ENCODE measurements at regions of chr7 and their contacts with region 1.

Region 1: GRCh38 chr7:74094224-74095101 is 10.9 kb downstream of the LIMK1 start:
- DNase-seq: peak; percentile 21 to 71 (median 29)
- ATAC-seq: peak; percentile 83
- H3K4me3 ChIP-seq: peak overlapping the region; percentile 77
- H3K4me3 Mint-ChIP-seq: peak overlapping the region; percentile 83 to 91 (median 88)
- H3K27ac ChIP-seq: peak overlapping the region; percentile 57
- H3K27ac Mint-ChIP-seq: peak overlapping the region; percentile 83 to 98 (median 90)
- H3K4me1 ChIP-seq: peaks cover 11 to 16% of the 10 kb centered on the region in 2 donors
- H3K4me1 Mint-ChIP-seq: peaks cover 3 to 23% (median 16%) of the 10 kb centered on the region in 7 donors
- H3K27me3 ChIP-seq: no peaks in the 10 kb centered on the region
- H3K27me3 Mint-ChIP-seq: no peaks in the 10 kb centered on the region

Region 2: GRCh38 chr7:74173866-74174605 is 79.6 kb after region 1 on chr7 and contains the start of gene EIF4H:
- CTCF ChIA-PET with region 1: interaction called, 3 read pairs
- POLR2A ChIA-PET with region 1: no interaction called
- intact Hi-C with region 1: loop called in 1 of 2 experiments (anchors 1 kb)
- DNase-seq: peak; percentile 90 to 97 (median 95)
- ATAC-seq: peak; percentile 97
- H3K4me3 ChIP-seq: peak within 1 kb of the TSS; percentile 87
- H3K4me3 Mint-ChIP-seq: peak within 1 kb of the TSS; percentile 86 to 98 (median 92)
- H3K27ac ChIP-seq: peak within 1 kb of the TSS; percentile 99
- H3K27ac Mint-ChIP-seq: peak within 1 kb of the TSS; percentile 88 to 97 (median 94)
- H3K4me1 ChIP-seq: peaks cover 41 to 43% of the 10 kb centered on the region in 2 donors
- H3K4me1 Mint-ChIP-seq: peaks cover 32 to 57% (median 47%) of the 10 kb centered on the region in 7 donors
- H3K27me3 ChIP-seq: no peaks in the 10 kb centered on the region
- H3K27me3 Mint-ChIP-seq: no peaks in the 10 kb centered on the region
- total RNA-seq, gene EIF4H: 163 to 284 (median 223) TPM

Measured in naive thymus-derived CD4-positive, alpha-beta T cell (primary cell).